ENCODE measurements at regions of chr15 and their contacts with region 1.

Region 1: GRCh38 chr15:65384895-65385858 is 7.4 kb upstream of the IGDCC3 start:
- DNase-seq: peak; percentile 85 to 89
- H3K4me3 ChIP-seq: peak overlapping the region; percentile 25 to 46
- H3K27ac ChIP-seq: peak overlapping the region; percentile 1 to 28
- H3K4me1 ChIP-seq: peaks cover 6 to 20% (median 15%) of the 10 kb centered on the region in 4 donors
- H3K27me3 ChIP-seq: peaks cover 0 to 5% of the 10 kb centered on the region in 2 donors
- CTCF ChIP-seq: peak; percentile 87 to 90

Region 2: DNA sequence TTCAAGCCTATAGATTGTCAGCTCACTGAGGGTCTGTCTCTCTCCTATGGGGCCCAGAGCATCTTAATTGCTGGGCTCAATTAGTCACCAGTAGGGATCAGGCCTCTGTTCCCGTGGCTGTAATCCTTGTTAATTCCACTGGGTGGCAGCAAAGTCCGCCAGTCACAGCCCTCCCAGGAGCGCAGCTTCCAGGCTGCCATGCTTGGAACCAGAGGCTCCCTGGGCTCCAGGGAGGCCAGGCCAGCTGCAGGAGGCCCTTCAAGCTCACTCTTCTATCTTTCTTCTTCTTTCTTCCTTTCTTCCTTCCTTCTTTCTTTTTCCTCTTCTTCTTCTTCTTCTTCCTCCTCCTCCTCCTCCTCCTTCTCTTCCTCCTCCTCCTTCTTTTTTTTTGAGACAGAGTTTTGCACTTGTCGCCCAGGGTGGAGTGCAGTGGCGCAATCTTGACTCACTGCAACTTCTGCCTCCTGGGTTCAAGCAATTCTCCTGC is 66.3 kb before region 1 on chr15:
- intact Hi-C with region 1: loop called (anchors 1 kb)
- DNase-seq: peak; percentile 65 to 84
- H3K4me3 ChIP-seq: no peak overlapping the region
- H3K27ac ChIP-seq: no peak overlapping the region
- H3K4me1 ChIP-seq: no peaks in the 10 kb centered on the region
- H3K27me3 ChIP-seq: peaks cover 0 to 25% of the 10 kb centered on the region in 2 donors
- CTCF ChIP-seq: peak; percentile 89 to 95